ENCODE measurements at regions of chrX and their contacts with region 1.

Region 1: GRCh38 chrX:130196466-130196865 is 24.7 kb downstream of the RAB33A start:
- DNase-seq: no peak
- H3K4me3 Mint-ChIP-seq: no peak overlapping the region
- H3K27ac Mint-ChIP-seq: no peak overlapping the region
- H3K4me1 Mint-ChIP-seq: peaks cover 2% of the 10 kb centered on the region
- H3K27me3 Mint-ChIP-seq: no peaks in the 10 kb centered on the region

Region 2: GRCh38 chrX:129925305-129926092 is 271.0 kb before region 1 on chrX:
- intact Hi-C with region 1: loop called (anchors 10 kb)
- DNase-seq: peak; percentile 90
- H3K4me3 Mint-ChIP-seq: no peak overlapping the region
- H3K27ac Mint-ChIP-seq: no peak overlapping the region
- H3K4me1 Mint-ChIP-seq: peaks cover 5% of the 10 kb centered on the region
- H3K27me3 Mint-ChIP-seq: no peaks in the 10 kb centered on the region

Region 3: DNA sequence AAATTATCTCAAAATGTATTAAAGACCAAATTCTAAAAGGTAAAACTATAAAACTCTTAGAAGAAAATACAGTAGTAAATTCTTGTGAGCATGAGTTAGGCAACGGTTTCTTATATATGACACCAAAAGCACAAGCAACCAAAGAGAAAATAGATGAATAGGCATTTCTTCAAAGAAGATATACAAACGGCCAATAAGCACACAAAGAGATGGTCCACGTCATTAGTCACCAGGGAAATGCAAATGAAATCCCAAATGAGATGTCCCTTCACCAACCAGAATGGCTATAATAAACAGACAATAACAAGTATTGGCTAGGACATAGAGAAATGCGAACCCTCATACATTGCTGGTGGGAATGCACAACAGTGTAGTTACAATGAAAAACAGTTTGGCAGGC is 19.9 kb after region 1 on chrX:
- intact Hi-C with region 1: loop called (anchors 1 kb)
- DNase-seq: no peak
- H3K4me3 Mint-ChIP-seq: no peak overlapping the region
- H3K27ac Mint-ChIP-seq: no peak overlapping the region
- H3K4me1 Mint-ChIP-seq: peaks cover 20% of the 10 kb centered on the region
- H3K27me3 Mint-ChIP-seq: no peaks in the 10 kb centered on the region